ENCODE measurements at regions of chr4 and their contacts with region 1.

Region 1: DNA sequence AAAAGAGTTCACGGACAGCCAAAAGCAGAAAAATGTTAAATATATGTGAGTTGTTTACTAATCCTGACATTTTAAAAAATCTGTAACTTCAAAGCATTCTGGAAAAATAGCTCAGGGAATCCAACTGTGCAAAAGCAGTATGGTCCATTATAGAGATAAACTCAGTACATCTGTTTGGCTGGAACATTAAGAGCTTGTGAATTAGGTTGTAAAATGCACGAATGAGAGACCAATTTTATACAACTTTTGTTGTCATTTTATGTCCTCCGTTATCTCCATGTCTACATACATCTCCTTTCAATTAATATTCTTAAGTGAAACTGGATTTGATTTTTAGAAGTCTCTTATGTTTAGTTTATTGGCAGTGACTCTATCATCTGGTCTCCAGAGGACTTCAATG is 367.0 kb upstream of the ATOH1 start:
- DNase-seq: no peak
- ATAC-seq: no peak
- H3K4me3 Mint-ChIP-seq: no peak overlapping the region
- H3K27ac Mint-ChIP-seq: no peak overlapping the region
- H3K4me1 Mint-ChIP-seq: no peaks in the 10 kb centered on the region
- H3K27me3 Mint-ChIP-seq: no peaks in the 10 kb centered on the region
- CTCF ChIP-seq: no peak

Region 2: DNA sequence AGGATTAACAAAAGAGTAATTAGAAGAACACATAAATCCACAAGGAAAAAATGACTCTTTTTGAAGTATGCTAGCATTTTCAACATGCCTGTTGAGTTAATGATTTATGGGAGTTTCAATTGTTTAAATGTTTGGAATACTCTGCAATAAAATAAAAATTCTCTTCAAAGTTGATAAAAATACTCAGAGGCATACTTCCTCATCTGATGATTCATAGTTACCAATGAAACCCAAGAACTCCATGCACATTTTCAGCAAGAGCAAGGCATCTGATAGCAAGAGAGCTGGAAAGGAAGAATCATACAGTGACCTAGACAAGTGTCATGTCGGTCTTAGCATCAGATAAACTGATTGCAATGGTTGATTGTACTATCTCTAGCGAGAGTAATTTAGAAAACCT is 76.7 kb before region 1 on chr4:
- CTCF ChIA-PET with region 1: no interaction called
- POLR2A ChIA-PET with region 1: interaction called, 10 read pairs
- DNase-seq: no peak
- ATAC-seq: no peak
- H3K4me3 Mint-ChIP-seq: no peak overlapping the region
- H3K27ac Mint-ChIP-seq: no peak overlapping the region
- H3K4me1 Mint-ChIP-seq: no peaks in the 10 kb centered on the region
- H3K27me3 Mint-ChIP-seq: no peaks in the 10 kb centered on the region
- CTCF ChIP-seq: no peak

Region 3: DNA sequence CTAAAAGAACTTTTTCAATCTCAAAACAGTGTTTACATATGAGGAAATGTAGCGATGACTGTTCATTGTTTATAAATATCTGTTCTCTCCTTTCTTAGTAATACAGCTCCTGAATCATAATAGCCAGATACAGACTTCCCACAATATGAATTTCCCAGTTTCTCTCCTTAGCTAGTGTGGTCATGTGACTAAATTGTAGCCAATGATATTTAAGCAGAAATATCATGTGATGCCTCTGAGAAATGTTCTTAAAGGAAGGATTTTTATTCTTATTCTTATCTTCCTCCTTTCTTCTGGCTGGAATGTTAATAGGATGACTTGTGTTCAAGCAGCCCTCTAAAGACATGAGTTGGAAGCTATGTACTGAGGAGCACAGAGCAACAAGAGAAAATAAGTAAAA is 16.7 kb before region 1 on chr4:
- CTCF ChIA-PET with region 1: no interaction called
- POLR2A ChIA-PET with region 1: no interaction called
- DNase-seq: no peak
- ATAC-seq: no peak
- H3K4me3 Mint-ChIP-seq: no peak overlapping the region
- H3K27ac Mint-ChIP-seq: no peak overlapping the region
- H3K4me1 Mint-ChIP-seq: 0 out of 2 replicates have a peak, but pooled peaks cover 3% of the 10 kb centered on the region
- H3K27me3 Mint-ChIP-seq: no peaks in the 10 kb centered on the region
- CTCF ChIP-seq: no peak

Region 4: GRCh38 chr4:93633721-93634120 is 172.2 kb after region 1 on chr4:
- CTCF ChIA-PET with region 1: no interaction called
- POLR2A ChIA-PET with region 1: no interaction called
- DNase-seq: no peak
- ATAC-seq: no peak
- H3K4me3 Mint-ChIP-seq: no peak overlapping the region
- H3K27ac Mint-ChIP-seq: no peak overlapping the region
- H3K4me1 Mint-ChIP-seq: peaks cover 2% of the 10 kb centered on the region
- H3K27me3 Mint-ChIP-seq: no peaks in the 10 kb centered on the region
- CTCF ChIP-seq: no peak